Right cardiac atrium (tissue), 5 donors: ENCODE measurements at regions of chr22 and their contacts with region 1.

Region 1: GRCh38 chr22:45878051-45878781 is 98.7 kb downstream of the WNT7B start:
- DNase-seq: peak; percentile 23 to 70 (median 63)
- ATAC-seq: peak; percentile 11 to 15
- H3K4me3 ChIP-seq: no peak overlapping the region
- H3K27ac ChIP-seq: no peak overlapping the region
- H3K4me1 ChIP-seq: no peaks in the 10 kb centered on the region
- H3K27me3 ChIP-seq: no peaks in the 10 kb centered on the region

Region 2: DNA sequence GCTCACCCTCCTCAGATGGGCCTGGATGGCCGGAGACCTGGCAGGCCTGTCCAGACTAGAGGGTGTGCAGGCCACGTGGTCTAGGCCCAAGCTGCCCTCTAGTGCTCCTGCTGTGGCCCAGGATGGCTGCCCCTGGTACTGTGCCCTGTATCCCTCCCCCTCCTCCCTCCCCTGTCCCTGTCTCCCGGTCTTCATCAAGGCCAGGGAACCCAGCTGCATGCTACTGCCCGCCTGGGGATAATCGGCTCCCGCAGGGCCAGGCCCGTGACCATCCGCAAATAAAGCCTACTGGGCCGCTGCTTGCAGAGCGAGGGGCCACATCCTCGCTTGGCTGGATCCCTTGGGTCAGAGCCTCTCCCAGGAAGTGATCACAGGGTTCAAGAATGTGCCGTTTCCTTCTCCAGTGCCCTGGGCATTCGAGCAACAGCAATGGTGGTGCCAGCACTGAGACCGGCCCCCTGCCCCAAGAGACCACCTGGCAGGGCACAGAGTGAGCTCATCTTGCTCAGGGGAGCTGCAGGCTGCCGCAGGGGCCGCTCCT is 47.7 kb after region 1 on chr22:
- intact Hi-C with region 1: no loop called
- DNase-seq: no peak
- ATAC-seq: peak in 1 of 2 donors; percentile 28
- H3K4me3 ChIP-seq: no peak overlapping the region
- H3K27ac ChIP-seq: no peak overlapping the region
- H3K4me1 ChIP-seq: no peaks in the 10 kb centered on the region
- H3K27me3 ChIP-seq: no peaks in the 10 kb centered on the region

Region 3: GRCh38 chr22:45952151-45952550 is 73.9 kb after region 1 on chr22:
- intact Hi-C with region 1: loop called in 1 of 4 experiments (anchors 10 kb)
- DNase-seq: no peak
- ATAC-seq: no peak
- H3K4me3 ChIP-seq: no peak overlapping the region
- H3K27ac ChIP-seq: no peak overlapping the region
- H3K4me1 ChIP-seq: no peaks in the 10 kb centered on the region
- H3K27me3 ChIP-seq: no peaks in the 10 kb centered on the region